GM18951 (cell line): ENCODE measurements at regions of chr11 and their contacts with region 1.

Region 1: GRCh38 chr11:10730151-10730550 is 20.9 kb upstream of the CTR9 start:
- POLR2A ChIP-seq: no peak

Region 2: GRCh38 chr11:9906043-9906791 is 823.9 kb before region 1 on chr11:
- in situ Hi-C with region 1: no loop called
- POLR2A ChIP-seq: no peak

Region 3: GRCh38 chr11:10400856-10401255 is 329.3 kb before region 1 on chr11:
- in situ Hi-C with region 1: loop called (anchors 5 kb)
- POLR2A ChIP-seq: no peak

Region 4: DNA sequence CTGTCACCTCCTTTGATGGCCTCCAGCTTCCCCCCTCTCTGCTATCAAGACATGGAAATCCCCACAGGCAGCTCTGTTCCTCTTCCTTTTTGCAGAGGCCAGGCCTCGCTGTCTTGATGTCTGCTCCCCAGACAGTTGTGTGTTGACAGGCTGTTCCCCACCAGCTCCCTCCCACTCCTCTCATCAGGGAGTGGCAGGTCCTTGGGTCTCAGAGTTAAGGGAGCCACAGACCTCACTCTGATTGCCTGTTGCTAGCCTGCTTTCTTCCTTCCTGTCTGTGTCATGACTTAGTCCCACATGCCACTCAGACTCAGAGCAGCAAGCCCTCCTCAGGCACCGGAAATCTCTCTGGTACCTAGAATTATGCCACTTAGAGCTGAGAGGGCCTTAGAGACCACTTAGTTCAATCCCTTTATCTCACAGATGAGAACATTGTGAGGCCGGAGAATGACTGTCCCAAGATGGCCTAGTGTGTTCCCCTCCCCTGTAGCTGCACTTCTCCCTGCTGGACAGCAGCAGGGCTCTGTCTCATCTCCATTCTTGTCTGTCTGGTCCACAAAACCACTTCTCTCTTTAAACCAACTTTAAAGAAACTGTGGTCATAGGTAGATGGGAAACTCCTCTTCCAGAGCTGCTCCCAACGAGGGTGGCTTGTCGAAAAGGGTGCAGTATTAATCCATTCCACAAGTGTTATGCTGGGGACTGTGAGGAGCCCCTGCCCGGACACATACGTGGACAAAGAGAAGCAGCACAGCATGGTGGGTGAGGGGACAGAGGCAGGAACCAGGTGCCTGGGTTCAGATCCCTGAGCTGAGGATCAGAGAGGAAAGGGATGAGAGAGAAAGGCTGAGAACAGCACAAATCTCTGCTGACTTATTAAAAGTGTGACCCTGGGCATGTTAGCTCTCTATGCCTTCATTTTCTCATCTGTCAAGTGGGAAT is 270.9 kb before region 1 on chr11:
- in situ Hi-C with region 1: no loop called
- POLR2A ChIP-seq: peak; percentile 28

Region 5: GRCh38 chr11:10612216-10612862 is 117.8 kb before region 1 on chr11:
- in situ Hi-C with region 1: no loop called
- POLR2A ChIP-seq: no peak

Region 6: GRCh38 chr11:10866893-10867331 is 136.8 kb after region 1 on chr11:
- in situ Hi-C with region 1: no loop called
- POLR2A ChIP-seq: no peak